Mammary epithelial cell (primary cell): ENCODE measurements at regions of chr11 and their contacts with region 1.

Region 1: GRCh38 chr11:33376331-33377310 is 119.4 kb downstream of the HIPK3 start:
- DNase-seq: peak; percentile 33
- H3K4me3 ChIP-seq: peak overlapping the region; percentile 25 to 60 (median 54)
- H3K27ac ChIP-seq: no peak overlapping the region
- H3K4me1 ChIP-seq: peaks cover 13% of the 10 kb centered on the region
- H3K27me3 ChIP-seq: no peaks in the 10 kb centered on the region
- CTCF ChIP-seq: no peak

Region 2: DNA sequence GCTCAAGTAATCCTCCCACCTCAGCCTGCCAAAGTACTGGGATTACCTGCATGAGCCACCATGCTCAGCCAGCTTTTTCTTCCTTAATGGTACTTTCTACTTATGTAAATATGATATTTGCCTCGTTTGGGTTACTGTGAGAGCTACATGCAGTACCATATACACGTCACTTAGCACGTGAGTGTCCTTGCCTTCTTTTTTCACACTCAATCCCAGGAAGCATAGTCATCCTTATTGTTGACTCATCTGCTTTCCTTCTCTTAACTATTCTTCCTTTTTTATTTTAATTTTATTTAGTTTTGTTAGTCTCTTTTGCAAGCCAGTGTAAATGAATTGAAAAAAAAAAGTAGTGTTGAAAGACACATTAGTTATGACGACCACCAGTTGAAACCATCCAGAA is 86.4 kb after region 1 on chr11:
- CTCF ChIA-PET with region 1: no interaction called
- dilution Hi-C with region 1: no loop called
- in situ Hi-C with region 1: no loop called
- intact Hi-C with region 1: loop called (anchors 5 kb)
- DNase-seq: no peak
- H3K4me3 ChIP-seq: no peak overlapping the region
- H3K27ac ChIP-seq: no peak overlapping the region
- H3K4me1 ChIP-seq: no peaks in the 10 kb centered on the region
- H3K27me3 ChIP-seq: no peaks in the 10 kb centered on the region
- CTCF ChIP-seq: no peak

Region 3: DNA sequence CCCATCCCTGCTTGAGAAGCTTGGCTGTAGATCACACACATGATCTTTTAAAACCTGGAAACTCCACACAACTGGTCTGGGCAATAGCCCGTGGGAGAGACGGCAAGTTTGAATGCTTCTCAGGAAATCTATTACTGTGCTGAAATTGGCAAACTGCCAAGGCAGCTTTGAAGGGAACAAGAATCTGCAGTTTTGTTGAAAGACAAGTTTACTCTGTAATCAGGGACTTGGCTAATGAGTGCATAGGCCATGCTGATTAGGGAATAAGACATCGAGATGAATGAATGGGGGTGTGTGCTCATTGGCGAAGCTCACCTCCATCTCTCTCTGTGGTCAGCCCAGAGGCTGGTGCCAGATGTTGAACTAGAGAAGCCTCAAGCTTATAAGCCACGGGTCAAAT is 99.4 kb after region 1 on chr11:
- CTCF ChIA-PET with region 1: no interaction called
- dilution Hi-C with region 1: loop called (anchors 5 kb)
- in situ Hi-C with region 1: no loop called
- intact Hi-C with region 1: no loop called
- DNase-seq: peak; percentile 74
- H3K4me3 ChIP-seq: no peak overlapping the region
- H3K27ac ChIP-seq: no peak overlapping the region
- H3K4me1 ChIP-seq: no peaks in the 10 kb centered on the region
- H3K27me3 ChIP-seq: no peaks in the 10 kb centered on the region
- CTCF ChIP-seq: no peak

Region 4: GRCh38 chr11:33530815-33531214 is 154.2 kb after region 1 on chr11:
- CTCF ChIA-PET with region 1: no interaction called
- dilution Hi-C with region 1: no loop called
- in situ Hi-C with region 1: no loop called
- intact Hi-C with region 1: no loop called
- DNase-seq: peak; percentile 26
- H3K4me3 ChIP-seq: no peak overlapping the region
- H3K27ac ChIP-seq: no peak overlapping the region
- H3K4me1 ChIP-seq: no peaks in the 10 kb centered on the region
- H3K27me3 ChIP-seq: no peaks in the 10 kb centered on the region
- CTCF ChIP-seq: no peak

Region 5: DNA sequence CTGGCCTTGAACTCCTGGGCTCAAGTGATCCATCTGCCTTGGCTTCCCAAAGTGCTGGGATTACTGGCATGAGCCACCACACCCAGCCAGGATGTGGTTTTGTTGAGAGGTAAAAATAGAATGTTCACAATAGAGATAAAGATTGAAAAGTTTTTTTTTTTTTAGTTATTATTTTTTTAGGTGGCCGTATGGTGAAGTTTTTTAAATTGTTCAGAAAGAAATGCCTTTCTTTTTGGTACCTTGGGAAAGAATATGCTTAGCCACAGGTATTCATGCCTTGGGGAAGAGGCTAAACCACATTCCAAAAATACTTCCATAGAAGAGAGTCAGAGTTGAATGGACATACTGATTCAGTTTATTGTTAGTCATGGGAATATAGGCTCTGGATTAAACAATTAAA is 180.6 kb after region 1 on chr11:
- CTCF ChIA-PET with region 1: no interaction called
- dilution Hi-C with region 1: no loop called
- in situ Hi-C with region 1: no loop called
- intact Hi-C with region 1: loop called (anchors 5 kb)
- DNase-seq: peak; percentile 92
- H3K4me3 ChIP-seq: no peak overlapping the region
- H3K27ac ChIP-seq: peak overlapping the region; percentile 77
- H3K4me1 ChIP-seq: peaks cover 22% of the 10 kb centered on the region
- H3K27me3 ChIP-seq: no peaks in the 10 kb centered on the region
- CTCF ChIP-seq: no peak

Region 6: DNA sequence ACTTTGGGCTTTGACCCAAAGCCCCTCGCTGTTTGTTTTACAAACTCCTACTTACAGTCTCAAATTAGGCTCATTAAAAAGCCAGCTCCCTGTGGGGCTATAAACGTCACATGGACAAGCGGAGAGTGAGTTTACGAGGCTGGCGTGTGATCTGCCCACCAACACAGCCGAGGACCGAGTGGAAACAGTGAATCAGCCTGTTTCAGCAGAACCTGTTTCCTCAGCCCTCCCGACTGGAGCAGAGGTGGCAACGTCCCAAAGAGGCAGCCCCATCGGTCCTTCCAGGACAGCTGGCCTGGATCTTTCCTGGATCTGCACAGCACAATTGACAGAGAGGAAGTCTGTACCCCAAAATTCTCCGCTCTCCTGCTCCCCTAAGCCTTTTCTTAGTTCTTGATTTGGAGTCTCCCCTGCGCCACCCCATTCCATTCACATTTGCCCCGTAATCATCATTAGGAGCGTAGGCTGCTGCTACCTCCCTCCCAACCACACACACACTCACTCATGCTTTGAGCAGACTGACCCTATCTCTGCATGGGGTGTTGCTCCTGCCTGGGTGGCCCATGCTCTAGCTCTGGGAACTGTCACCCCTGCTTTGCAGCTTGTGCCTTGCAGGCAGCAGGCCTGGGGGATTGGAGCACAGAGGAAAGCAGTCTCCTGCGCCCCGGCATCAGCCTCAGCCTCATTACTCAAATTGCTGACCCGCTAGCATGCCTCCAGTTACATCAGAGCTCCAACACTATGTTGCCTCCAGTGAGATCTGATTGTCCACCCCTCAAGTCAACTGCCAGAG is 846.6 kb after region 1 on chr11:
- CTCF ChIA-PET with region 1: no interaction called
- dilution Hi-C with region 1: no loop called
- in situ Hi-C with region 1: no loop called
- intact Hi-C with region 1: no loop called
- DNase-seq: no peak
- H3K4me3 ChIP-seq: no peak overlapping the region
- H3K27ac ChIP-seq: no peak overlapping the region
- H3K4me1 ChIP-seq: no peaks in the 10 kb centered on the region
- H3K27me3 ChIP-seq: no peaks in the 10 kb centered on the region
- CTCF ChIP-seq: no peak